Activated T-helper 2 cell treated with anti-CD3 and anti-CD28 coated beads, Interferon-gamma antibody, Interleukin-2, Interleukin-4, amounts not matched to agents 10 μg/mL and 5 μg/mL and 100 μg/mL, durations not matched to agents 14 hours and 24 hours and 36 hours (primary cell): ENCODE measurements at regions of chr1 and their contacts with region 1.

Region 1: GRCh38 chr1:151146412-151147140 is at the start of gene SEMA6C:
- DNase-seq: peak; percentile 88
- H3K4me3 Mint-ChIP-seq: peak within 1 kb of the TSS; percentile 88
- H3K27ac Mint-ChIP-seq: peak within 1 kb of the TSS; percentile 28
- H3K4me1 Mint-ChIP-seq: peaks cover 10% of the 10 kb centered on the region
- H3K27me3 Mint-ChIP-seq: peaks cover 16% of the 10 kb centered on the region
- total RNA-seq, gene SEMA6C: 1.7 and 2.0 TPM in 2 replicates

Region 2: GRCh38 chr1:151130987-151131586 is 15.5 kb before region 1 on chr1:
- intact Hi-C with region 1: loop called (anchors 1 kb)
- DNase-seq: peak; percentile 65
- H3K4me3 Mint-ChIP-seq: peak overlapping the region; percentile 56
- H3K27ac Mint-ChIP-seq: peak overlapping the region; percentile 60
- H3K4me1 Mint-ChIP-seq: peaks cover 6% of the 10 kb centered on the region
- H3K27me3 Mint-ChIP-seq: no peaks in the 10 kb centered on the region

Region 3: GRCh38 chr1:151165738-151166505 is 19.3 kb after region 1 on chr1 and contains the starts of genes LYSMD1 and SCNM1:
- intact Hi-C with region 1: no loop called
- DNase-seq: peak; percentile 97
- H3K4me3 Mint-ChIP-seq: peak within 1 kb of the TSS; percentile 91
- H3K27ac Mint-ChIP-seq: peak within 1 kb of the TSS; percentile 91
- H3K4me1 Mint-ChIP-seq: peaks cover 36% of the 10 kb centered on the region
- H3K27me3 Mint-ChIP-seq: no peaks in the 10 kb centered on the region
- total RNA-seq, gene LYSMD1: 3.6 and 4.9 TPM in 2 replicates
- total RNA-seq, gene SCNM1: 82.4 and 89.1 TPM in 2 replicates

Region 4: DNA sequence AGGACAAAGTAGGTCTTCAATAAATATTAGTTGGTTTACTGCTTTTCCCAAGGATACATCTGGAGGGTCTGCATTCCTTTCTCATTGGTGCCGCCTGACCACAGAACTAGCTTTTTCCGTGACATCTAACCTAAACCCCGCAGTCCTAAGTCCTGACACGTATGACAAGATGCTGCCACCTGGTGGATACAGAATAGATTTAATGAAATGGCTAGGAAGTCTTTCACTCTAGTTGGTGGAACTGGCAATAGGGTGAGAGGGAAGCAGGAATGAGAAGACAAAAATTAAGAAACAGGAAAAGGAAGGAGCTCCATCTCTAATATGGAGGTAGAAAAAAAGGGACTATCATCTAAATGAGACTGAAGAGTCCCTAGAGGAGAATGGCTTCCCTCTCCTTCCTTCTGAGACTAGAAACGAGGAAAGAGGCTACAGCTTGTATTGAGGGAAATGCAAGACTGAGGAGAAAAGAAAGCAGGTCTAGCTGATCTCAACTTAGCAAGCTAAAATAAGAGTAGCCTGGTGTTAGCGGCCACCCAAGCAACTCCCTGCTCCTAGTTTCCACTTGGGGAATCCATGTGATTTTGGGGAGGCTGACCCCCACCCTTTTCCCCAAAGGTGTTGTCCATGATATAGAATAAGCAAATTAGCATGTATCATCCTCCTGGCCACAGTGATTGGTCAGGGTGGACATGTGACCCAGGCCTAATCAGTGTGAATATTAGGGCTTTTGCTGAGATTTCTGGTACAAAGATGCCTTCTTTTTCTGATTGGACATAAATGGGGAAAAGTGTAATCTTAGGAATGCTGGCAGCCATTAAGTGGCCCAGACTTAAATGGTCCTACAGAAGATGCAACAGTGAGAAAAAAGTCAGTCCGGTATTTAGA is 194.5 kb after region 1 on chr1:
- intact Hi-C with region 1: no loop called
- DNase-seq: peak; percentile 36
- H3K4me3 Mint-ChIP-seq: no peak overlapping the region
- H3K27ac Mint-ChIP-seq: peak overlapping the region; percentile 70
- H3K4me1 Mint-ChIP-seq: peaks cover 22% of the 10 kb centered on the region
- H3K27me3 Mint-ChIP-seq: no peaks in the 10 kb centered on the region

Region 5: DNA sequence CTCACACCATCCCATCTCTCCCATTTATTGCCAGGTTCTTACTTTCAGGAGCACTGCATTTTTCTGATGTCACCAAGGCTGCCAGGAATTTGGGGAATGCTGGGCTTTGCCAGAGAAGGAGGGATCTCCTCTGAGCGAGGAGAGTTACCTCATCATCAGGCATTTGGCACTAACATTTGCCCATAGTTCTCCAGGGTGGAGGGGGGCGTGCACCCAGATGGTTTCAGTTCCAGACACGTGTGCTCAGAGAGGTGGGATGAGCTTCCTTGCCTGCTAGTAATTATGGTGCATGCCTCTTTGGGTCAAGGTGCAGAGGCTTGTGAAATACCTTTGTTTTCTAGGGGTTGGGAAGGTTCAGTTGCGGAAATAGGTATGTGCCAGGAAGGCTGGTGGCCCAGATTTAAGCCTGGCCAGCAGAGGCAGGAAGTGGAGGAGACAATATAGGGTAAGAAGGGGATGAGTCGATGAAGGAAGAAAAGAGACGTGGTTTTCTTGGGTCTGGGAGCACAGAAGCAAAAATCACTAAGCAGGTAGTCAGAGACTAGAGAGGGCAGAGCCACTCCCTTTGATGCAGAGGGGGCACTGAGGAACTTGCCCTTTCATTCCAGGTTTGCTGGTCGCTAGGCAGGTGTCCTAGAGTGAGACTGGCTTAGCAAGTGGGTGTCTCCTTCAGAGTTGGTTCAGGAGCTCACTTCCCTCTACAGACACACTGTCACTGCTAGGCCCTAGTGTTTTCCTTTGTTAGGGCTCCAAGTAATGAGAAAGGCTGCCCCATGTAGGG is 400.7 kb after region 1 on chr1:
- intact Hi-C with region 1: no loop called
- DNase-seq: no peak
- H3K4me3 Mint-ChIP-seq: no peak overlapping the region
- H3K27ac Mint-ChIP-seq: no peak overlapping the region
- H3K4me1 Mint-ChIP-seq: peaks cover 4% of the 10 kb centered on the region
- H3K27me3 Mint-ChIP-seq: no peaks in the 10 kb centered on the region